BJ (cell line): ENCODE measurements at regions of chr2 and their contacts with region 1.

Region 1: GRCh38 chr2:17672583-17673317 is 80.9 kb downstream of the SMC6 start:
- DNase-seq: peak; percentile 22
- H3K4me3 ChIP-seq: no peak overlapping the region
- H3K27me3 ChIP-seq: no peaks in the 10 kb centered on the region
- CTCF ChIP-seq: no peak

Region 2: GRCh38 chr2:17658251-17658843 is 14.4 kb before region 1 on chr2:
- CTCF ChIA-PET with region 1: interaction called, 33 read pairs
- POLR2A ChIA-PET with region 1: no interaction called
- DNase-seq: peak; percentile 65
- H3K4me3 ChIP-seq: no peak overlapping the region
- H3K27me3 ChIP-seq: no peaks in the 10 kb centered on the region
- CTCF ChIP-seq: no peak

Region 3: GRCh38 chr2:17719562-17720371 is 47.0 kb after region 1 on chr2:
- CTCF ChIA-PET with region 1: no interaction called
- POLR2A ChIA-PET with region 1: no interaction called
- DNase-seq: no peak
- H3K4me3 ChIP-seq: no peak overlapping the region
- H3K27me3 ChIP-seq: no peaks in the 10 kb centered on the region
- CTCF ChIP-seq: peak; percentile 76